Endothelial cell of umbilical vein (primary cell): ENCODE measurements at regions of chr1 and their contacts with region 1.

Region 1: DNA sequence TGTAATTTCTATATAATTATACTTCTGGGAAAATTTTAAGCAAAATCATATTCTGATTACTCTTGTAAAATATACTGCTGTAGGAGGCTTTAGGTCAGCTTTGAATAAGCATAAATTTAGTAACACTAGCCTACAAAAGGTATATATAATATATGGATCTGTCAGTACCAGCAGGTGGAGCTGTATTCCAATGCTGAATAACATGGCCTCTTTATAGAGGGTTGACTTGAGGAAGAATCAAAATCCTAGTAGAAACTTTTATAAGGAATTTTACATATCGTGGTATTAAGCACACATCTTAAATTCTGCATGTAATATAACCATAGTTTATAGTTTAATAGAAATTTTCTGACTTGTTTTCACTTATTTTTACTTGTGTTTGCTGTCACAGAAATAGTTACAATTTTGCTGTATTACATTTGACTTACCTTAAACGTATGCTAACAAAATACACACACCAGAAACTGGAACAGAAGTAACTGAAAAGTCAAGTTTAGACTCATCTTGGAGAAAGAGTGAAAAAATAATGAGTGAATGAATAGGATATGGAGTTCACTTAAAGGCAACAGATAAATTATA is 79.3 kb downstream of the HMCN1 start:
- DNase-seq: peak; percentile 80
- H3K4me3 ChIP-seq: no peak overlapping the region
- H3K27ac ChIP-seq: no peak overlapping the region
- H3K4me1 ChIP-seq: no peaks in the 10 kb centered on the region
- H3K27me3 ChIP-seq: no peaks in the 10 kb centered on the region
- CTCF ChIP-seq: peak; percentile 26 to 40
- POLR2A ChIP-seq: no peak

Region 2: GRCh38 chr1:186009039-186009737 is 195.7 kb after region 1 on chr1:
- CTCF ChIA-PET with region 1: interaction called, 5 read pairs
- POLR2A ChIA-PET with region 1: no interaction called
- dilution Hi-C with region 1: no loop called
- intact Hi-C with region 1: loop called (anchors 10 kb)
- DNase-seq: peak; percentile 96
- H3K4me3 ChIP-seq: peak overlapping the region in 1 of 3 experiments; percentile 28
- H3K27ac ChIP-seq: peak overlapping the region; percentile 76
- H3K4me1 ChIP-seq: peaks cover 15% of the 10 kb centered on the region
- H3K27me3 ChIP-seq: no peaks in the 10 kb centered on the region
- CTCF ChIP-seq: no peak
- POLR2A ChIP-seq: no peak

Region 3: GRCh38 chr1:186155594-186155993 is 342.1 kb after region 1 on chr1:
- CTCF ChIA-PET with region 1: interaction called, 8 read pairs
- POLR2A ChIA-PET with region 1: no interaction called
- dilution Hi-C with region 1: no loop called
- intact Hi-C with region 1: loop called (anchors 2 kb)
- DNase-seq: peak; percentile 60
- H3K4me3 ChIP-seq: no peak overlapping the region
- H3K27ac ChIP-seq: no peak overlapping the region
- H3K4me1 ChIP-seq: no peaks in the 10 kb centered on the region
- H3K27me3 ChIP-seq: no peaks in the 10 kb centered on the region
- CTCF ChIP-seq: peak; percentile 41 to 45
- POLR2A ChIP-seq: no peak

Region 4: DNA sequence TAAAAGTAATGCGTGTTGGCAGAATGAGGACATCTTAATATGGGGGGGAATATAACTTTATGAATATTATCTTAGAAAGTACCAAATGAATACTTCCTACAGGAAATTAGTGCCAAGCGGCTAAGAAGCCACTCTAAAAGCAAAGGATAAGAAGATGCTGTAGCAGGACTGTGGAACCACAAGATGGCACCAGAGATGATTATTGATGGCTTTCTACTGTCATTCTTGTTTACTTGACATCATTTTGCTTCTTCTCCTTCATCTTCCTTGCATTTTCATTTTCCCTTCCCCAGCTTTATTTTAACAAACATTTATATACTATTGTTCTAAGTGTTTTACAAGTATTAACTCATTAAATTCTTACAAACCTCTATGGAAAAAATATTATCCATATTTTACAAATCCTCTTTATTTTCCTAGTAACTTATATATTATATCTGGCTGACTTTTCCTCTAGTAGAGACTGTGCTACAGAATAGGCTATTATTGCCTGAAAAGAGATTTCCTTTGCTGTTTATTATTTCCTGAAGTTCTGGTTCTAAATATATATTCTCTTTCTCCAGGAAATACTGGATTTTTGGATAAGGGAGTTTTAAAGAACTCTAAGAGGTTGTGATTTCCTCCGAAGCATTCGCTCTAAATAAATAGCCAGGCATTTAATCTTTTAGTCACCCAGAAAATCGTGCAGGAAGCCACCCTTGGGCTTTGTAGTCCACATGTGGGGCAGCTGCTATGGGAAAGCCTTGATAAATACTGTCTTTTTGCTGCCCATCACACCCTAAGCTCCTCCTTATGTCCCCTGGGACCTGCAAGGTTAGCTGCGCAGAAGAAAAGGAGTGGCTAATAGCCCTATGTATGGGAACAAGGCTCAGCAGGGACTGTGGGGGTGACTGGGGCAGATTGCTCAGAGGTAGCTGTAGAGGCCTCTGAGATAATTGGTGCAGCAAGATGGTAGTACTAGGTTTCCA is 491.8 kb after region 1 on chr1:
- CTCF ChIA-PET with region 1: no interaction called
- POLR2A ChIA-PET with region 1: no interaction called
- dilution Hi-C with region 1: no loop called
- intact Hi-C with region 1: loop called (anchors 10 kb)
- DNase-seq: peak; percentile 79
- H3K4me3 ChIP-seq: no peak overlapping the region
- H3K27ac ChIP-seq: no peak overlapping the region
- H3K4me1 ChIP-seq: peaks cover 4% of the 10 kb centered on the region
- H3K27me3 ChIP-seq: no peaks in the 10 kb centered on the region
- CTCF ChIP-seq: peak; percentile 33
- POLR2A ChIP-seq: no peak